ENCODE measurements at regions of chr2 and their contacts with region 1.

Region 1: GRCh38 chr2:173048897-173049661 is 26.6 kb upstream of the MAP3K20 start:
- DNase-seq: peak; percentile 59
- H3K4me3 Mint-ChIP-seq: peak overlapping the region; percentile 2
- H3K27ac Mint-ChIP-seq: no peak overlapping the region
- H3K4me1 Mint-ChIP-seq: peaks cover 13% of the 10 kb centered on the region
- H3K27me3 Mint-ChIP-seq: peaks cover 12% of the 10 kb centered on the region

Region 2: GRCh38 chr2:172735582-172736423 is 313.3 kb before region 1 on chr2 and contains the start of gene RAPGEF4:
- CTCF ChIA-PET with region 1: no interaction called
- intact Hi-C with region 1: no loop called
- DNase-seq: no peak
- H3K4me3 Mint-ChIP-seq: peak within 1 kb of the TSS; percentile 44
- H3K27ac Mint-ChIP-seq: no peak within 1 kb of the TSS
- H3K4me1 Mint-ChIP-seq: peaks cover 4% of the 10 kb centered on the region
- H3K27me3 Mint-ChIP-seq: peaks cover 47% of the 10 kb centered on the region
- total RNA-seq, gene RAPGEF4: 0.24 to 0.35 TPM

Region 3: DNA sequence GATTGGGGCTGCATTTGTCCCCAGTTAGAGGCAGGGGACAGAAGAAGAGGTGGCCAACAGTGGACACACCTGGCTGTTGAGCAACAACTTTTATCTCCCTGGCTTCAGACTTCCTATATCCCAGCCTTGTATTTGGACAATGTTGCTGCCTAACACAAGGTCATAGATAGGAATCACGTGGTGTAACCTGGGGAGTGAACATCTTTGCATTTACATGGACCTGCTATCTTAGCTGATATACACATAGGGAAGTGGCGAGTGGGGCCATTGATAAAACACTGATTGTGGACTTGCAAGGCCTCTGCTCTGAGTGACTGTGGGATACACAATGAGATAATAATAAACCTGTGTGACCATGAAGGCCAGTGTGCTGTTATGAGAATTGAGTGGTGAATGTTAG is 286.5 kb before region 1 on chr2:
- CTCF ChIA-PET with region 1: no interaction called
- intact Hi-C with region 1: no loop called
- DNase-seq: no peak
- H3K4me3 Mint-ChIP-seq: no peak overlapping the region
- H3K27ac Mint-ChIP-seq: no peak overlapping the region
- H3K4me1 Mint-ChIP-seq: no peaks in the 10 kb centered on the region
- H3K27me3 Mint-ChIP-seq: no peaks in the 10 kb centered on the region

Region 4: GRCh38 chr2:172972005-172972619 is 77.0 kb before region 1 on chr2:
- CTCF ChIA-PET with region 1: no interaction called
- intact Hi-C with region 1: loop called (anchors 2 kb)
- DNase-seq: peak; percentile 70
- H3K4me3 Mint-ChIP-seq: no peak overlapping the region
- H3K27ac Mint-ChIP-seq: no peak overlapping the region
- H3K4me1 Mint-ChIP-seq: peaks cover 23% of the 10 kb centered on the region
- H3K27me3 Mint-ChIP-seq: peaks cover 14% of the 10 kb centered on the region

Region 5: GRCh38 chr2:173037245-173038120 is 11.6 kb before region 1 on chr2:
- CTCF ChIA-PET with region 1: no interaction called
- intact Hi-C with region 1: no loop called
- DNase-seq: no peak
- H3K4me3 Mint-ChIP-seq: no peak overlapping the region
- H3K27ac Mint-ChIP-seq: no peak overlapping the region
- H3K4me1 Mint-ChIP-seq: peaks cover 3% of the 10 kb centered on the region
- H3K27me3 Mint-ChIP-seq: no peaks in the 10 kb centered on the region

Region 6: DNA sequence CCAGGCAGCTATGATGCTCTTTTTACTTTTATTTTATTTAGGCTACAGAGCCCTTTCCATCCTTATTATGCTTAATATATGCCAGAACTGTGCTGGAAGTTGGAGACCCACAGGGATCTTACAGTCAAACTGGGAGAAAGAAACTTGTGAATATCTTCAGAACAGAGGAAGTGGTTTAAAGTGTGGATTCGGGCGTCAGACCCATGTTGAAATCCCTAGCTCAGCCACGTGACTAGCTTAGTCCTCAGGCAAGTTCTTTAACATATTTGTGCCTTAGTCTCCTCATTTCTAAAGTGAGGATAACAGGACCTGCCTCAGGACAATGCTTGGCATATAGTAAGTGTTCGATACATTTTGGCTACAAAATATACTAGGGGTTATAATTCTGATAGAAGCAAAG is 85.6 kb after region 1 on chr2:
- CTCF ChIA-PET with region 1: no interaction called
- intact Hi-C with region 1: loop called (anchors 1 kb)
- DNase-seq: peak; percentile 18
- H3K4me3 Mint-ChIP-seq: no peak overlapping the region
- H3K27ac Mint-ChIP-seq: no peak overlapping the region
- H3K4me1 Mint-ChIP-seq: peaks cover 46% of the 10 kb centered on the region
- H3K27me3 Mint-ChIP-seq: peaks cover 40% of the 10 kb centered on the region

Region 7: GRCh38 chr2:173354601-173355131 is 305.6 kb after region 1 on chr2 and contains the start of gene CDCA7:
- CTCF ChIA-PET with region 1: no interaction called
- intact Hi-C with region 1: loop called (anchors 5 kb)
- DNase-seq: peak; percentile 77
- H3K4me3 Mint-ChIP-seq: peak within 1 kb of the TSS; percentile 83
- H3K27ac Mint-ChIP-seq: peak within 1 kb of the TSS; percentile 85
- H3K4me1 Mint-ChIP-seq: peaks cover 14% of the 10 kb centered on the region
- H3K27me3 Mint-ChIP-seq: peaks cover 51% of the 10 kb centered on the region
- total RNA-seq, gene CDCA7: 74.0 to 74.7 TPM